ENCODE measurements at regions of chr17 and their contacts with region 1.

Region 1: GRCh38 chr17:32877164-32877764 is 340 bp upstream of the MYO1D start:
- DNase-seq: peak; percentile 61 to 93
- H3K4me3 ChIP-seq: peak overlapping the region; percentile 66 to 89 (median 78)
- H3K27ac ChIP-seq: peak overlapping the region; percentile 90; the same call in 1 of the 2 replicates
- H3K4me1 ChIP-seq: no peaks in the 10 kb centered on the region; a peak in 1 of 7 replicates
- H3K27me3 ChIP-seq: no peaks in the 10 kb centered on the region
- CTCF ChIP-seq: peak; percentile 77 to 99 (median 89)
- EP300 ChIP-seq: no peak
- POLR2A ChIP-seq: no peak
- RAD21 ChIP-seq: peak; percentile 58 to 75

Region 2: DNA sequence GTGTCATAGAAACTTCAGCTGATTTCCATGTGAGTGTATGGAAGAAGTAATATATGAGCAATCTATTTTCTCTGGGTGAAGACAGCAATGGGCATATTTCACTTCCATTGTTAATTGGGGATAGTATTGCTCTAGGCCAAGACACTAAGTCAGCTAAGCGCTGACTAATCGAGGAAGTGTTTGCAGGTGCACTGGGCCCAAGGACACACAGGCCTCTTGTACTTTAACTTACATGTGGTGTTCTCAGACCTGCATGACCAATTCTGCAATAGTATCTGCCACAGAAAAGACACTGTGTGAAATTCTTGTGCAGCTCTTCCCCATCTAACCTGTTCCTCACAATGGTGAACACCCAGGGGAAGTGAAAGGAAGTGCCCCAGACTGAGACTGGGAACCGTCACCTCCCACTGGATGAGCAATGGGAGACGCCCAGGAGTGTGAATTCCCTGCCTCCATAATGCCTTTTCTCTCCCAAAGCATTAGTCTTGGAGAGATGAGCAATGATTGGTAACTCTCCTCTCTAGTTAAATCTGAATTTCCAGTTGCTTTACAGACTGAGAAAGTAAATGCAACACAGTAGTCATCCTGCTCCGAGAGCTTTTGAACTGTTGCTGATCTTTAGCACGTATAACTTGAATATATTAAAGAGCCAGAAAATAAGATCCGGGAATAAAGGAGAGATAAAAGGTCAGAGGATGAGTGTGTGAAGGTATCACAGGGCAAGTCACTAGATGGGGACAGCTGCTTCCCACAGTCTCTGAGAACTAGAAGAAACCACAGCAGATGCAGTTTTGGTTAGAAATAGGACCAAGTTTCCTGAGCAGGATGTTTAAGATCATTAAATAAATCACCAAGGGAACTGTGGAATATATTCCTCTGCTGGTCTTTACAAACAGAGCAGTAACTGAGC is 307.8 kb before region 1 on chr17:
- CTCF ChIA-PET with region 1: no interaction called
- POLR2A ChIA-PET with region 1: no interaction called
- DNase-seq: peak in 1 of 2 experiments; percentile 37
- H3K4me3 ChIP-seq: no peak overlapping the region
- H3K27ac ChIP-seq: no peak overlapping the region
- H3K4me1 ChIP-seq: 0 out of 7 replicates have a peak, but pooled peaks cover 0 to 3% (median 0%) of the 10 kb centered on the region in 4 experiments
- H3K27me3 ChIP-seq: no peaks in the 10 kb centered on the region
- CTCF ChIP-seq: no peak
- EP300 ChIP-seq: no peak
- POLR2A ChIP-seq: no peak
- RAD21 ChIP-seq: no peak

Region 3: DNA sequence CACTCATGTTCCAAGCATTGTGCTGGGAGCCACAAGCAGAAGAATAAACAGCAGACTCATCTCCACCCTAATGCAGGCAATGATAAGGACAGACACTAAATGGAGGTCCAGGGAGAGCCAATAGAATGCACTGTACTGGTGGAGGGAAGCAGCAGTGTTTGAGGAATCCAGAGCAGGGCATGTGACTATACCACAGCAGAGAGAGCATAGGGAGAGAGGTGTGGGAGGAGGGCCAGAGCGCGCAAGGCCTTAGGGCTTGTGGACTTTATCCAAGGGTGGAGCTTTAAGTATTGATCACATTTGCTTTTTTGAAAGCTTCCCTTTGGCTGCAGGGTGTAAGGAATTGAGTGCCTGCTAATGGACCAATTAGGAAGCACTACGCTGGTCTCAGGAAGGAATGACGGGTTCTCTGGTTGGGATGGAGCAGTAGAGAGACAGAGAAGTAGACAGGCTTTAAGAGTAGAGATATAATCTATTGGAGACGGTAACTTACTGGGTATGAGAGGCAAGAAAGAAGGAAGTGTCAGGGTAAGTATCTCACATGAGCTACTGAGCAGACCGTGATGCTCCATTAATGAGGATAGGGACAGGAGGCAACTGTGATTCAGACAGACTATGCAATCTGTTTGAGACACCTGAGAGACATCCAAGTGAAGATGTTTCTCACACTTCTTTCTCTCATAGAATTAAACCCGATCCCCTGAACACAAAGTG is 82.6 kb before region 1 on chr17:
- CTCF ChIA-PET with region 1: interaction called, 34 read pairs
- POLR2A ChIA-PET with region 1: interaction called, 4 read pairs
- DNase-seq: no peak
- H3K4me3 ChIP-seq: no peak overlapping the region
- H3K27ac ChIP-seq: no peak overlapping the region
- H3K4me1 ChIP-seq: no peaks in the 10 kb centered on the region
- H3K27me3 ChIP-seq: no peaks in the 10 kb centered on the region
- CTCF ChIP-seq: no peak
- EP300 ChIP-seq: no peak
- POLR2A ChIP-seq: no peak
- RAD21 ChIP-seq: no peak

Region 4: DNA sequence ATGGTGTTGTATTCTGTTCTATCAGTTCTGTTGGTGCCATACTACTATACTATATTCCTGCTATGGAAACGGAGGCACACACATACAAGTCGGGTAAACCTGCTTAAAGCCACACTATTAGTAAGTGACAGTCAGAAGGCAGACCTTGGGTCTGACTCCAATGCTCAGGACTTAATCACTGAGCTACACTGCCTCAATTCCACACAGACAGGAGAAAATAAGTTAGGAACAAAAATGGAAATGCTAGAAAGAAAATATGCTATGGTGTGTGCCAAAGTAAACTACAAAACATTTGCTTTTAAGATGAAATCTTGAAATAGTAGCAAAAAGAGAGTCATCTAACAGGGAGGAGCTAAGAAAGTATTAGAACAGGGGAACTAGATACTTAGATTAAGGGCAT is 48.4 kb before region 1 on chr17:
- CTCF ChIA-PET with region 1: interaction called, 13 read pairs
- POLR2A ChIA-PET with region 1: no interaction called
- DNase-seq: no peak
- H3K4me3 ChIP-seq: no peak overlapping the region
- H3K27ac ChIP-seq: no peak overlapping the region
- H3K4me1 ChIP-seq: no peaks in the 10 kb centered on the region
- H3K27me3 ChIP-seq: no peaks in the 10 kb centered on the region
- CTCF ChIP-seq: no peak
- EP300 ChIP-seq: no peak
- POLR2A ChIP-seq: no peak
- RAD21 ChIP-seq: no peak

Region 5: DNA sequence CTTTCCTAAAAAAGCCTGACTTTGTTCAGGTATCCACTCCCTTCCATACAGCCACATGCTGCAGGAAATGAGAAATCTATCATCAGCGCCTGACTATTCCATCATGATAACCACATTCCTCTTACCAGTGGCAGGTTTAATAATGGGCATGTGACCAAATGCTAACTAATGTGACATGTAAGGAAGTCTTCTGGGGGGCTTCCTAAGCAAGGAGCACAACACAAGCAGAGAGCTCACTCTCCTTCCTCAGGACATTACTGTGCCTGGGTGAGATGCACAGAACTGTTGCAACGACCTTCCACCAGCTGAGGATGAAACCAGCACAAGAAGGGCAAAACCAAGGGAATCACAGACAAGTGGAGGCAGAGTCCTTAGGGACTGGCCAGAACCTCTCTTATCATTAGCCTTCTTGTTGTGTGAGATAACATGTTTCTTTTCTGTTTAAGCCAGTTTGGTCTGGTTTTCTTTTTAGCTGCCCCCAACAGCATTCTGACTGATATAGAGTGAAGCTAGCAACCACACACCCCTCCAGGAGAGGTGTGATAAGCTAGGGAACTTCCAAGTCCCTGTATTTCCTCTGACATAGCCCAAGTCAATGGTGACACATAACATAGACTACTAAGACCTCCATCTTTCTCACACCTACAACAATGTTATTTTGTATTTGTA is 17.3 kb before region 1 on chr17:
- CTCF ChIA-PET with region 1: interaction called, 52 read pairs
- POLR2A ChIA-PET with region 1: interaction called, 11 read pairs
- DNase-seq: no peak
- H3K4me3 ChIP-seq: no peak overlapping the region
- H3K27ac ChIP-seq: no peak overlapping the region
- H3K4me1 ChIP-seq: no peaks in the 10 kb centered on the region
- H3K27me3 ChIP-seq: no peaks in the 10 kb centered on the region
- CTCF ChIP-seq: no peak
- EP300 ChIP-seq: no peak
- POLR2A ChIP-seq: no peak
- RAD21 ChIP-seq: no peak

Region 6: DNA sequence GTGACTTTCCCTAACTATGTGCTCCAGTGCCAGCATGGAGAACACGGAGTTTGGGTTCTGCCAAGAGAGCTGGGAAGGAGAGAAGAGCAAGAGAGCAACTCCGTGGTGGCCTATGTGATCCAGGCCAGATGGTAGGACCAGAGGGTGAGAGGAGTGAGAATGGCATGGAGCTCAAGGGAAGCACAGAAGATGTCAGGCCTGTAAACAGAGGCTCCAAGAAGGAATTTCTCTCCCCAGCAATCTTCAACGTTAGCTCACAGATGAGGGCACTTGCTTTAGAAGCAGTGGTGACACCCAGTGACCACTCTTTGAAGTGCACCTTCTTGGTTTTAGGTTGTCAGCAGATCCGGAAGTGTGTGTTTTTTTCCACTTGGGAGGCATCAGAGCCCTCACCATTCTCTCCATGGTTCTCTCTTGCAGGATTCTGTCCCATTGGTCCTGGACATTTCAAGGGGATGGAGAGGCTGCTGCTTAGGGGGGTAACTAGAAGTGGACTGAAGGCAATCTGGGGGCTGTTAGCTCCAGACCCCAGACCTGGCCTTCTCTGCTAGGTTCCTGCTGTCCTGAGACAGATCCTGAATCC is 32.6 kb after region 1 on chr17:
- CTCF ChIA-PET with region 1: interaction called, 47 read pairs
- POLR2A ChIA-PET with region 1: no interaction called
- DNase-seq: peak in 1 of 2 experiments; percentile 80
- H3K4me3 ChIP-seq: no peak overlapping the region
- H3K27ac ChIP-seq: no peak overlapping the region
- H3K4me1 ChIP-seq: peaks cover 0 to 3% (median 1%) of the 10 kb centered on the region in 4 experiments; a peak in 2 of 7 replicates
- H3K27me3 ChIP-seq: no peaks in the 10 kb centered on the region
- CTCF ChIP-seq: peak; percentile 40 to 91 (median 70)
- EP300 ChIP-seq: no peak
- POLR2A ChIP-seq: no peak
- RAD21 ChIP-seq: peak; percentile 81 to 89

Region 7: GRCh38 chr17:32997753-32998632 is 120.7 kb after region 1 on chr17:
- CTCF ChIA-PET with region 1: no interaction called
- POLR2A ChIA-PET with region 1: no interaction called
- DNase-seq: peak; percentile 54 to 97
- H3K4me3 ChIP-seq: peak overlapping the region in 1 of 4 experiments; percentile 32; a peak in 1 of 8 replicates
- H3K27ac ChIP-seq: no peak overlapping the region
- H3K4me1 ChIP-seq: peaks cover 0 to 3% (median 0%) of the 10 kb centered on the region in 4 experiments; a peak in 2 of 7 replicates
- H3K27me3 ChIP-seq: peaks cover 0 to 5% (median 0%) of the 10 kb centered on the region in 4 experiments; a peak in 4 of 7 replicates
- CTCF ChIP-seq: peak; percentile 85 to 93 (median 85)
- EP300 ChIP-seq: no peak
- POLR2A ChIP-seq: no peak
- RAD21 ChIP-seq: peak; percentile 73 to 83

Measured in H1 (cell line).